Activated CD4-positive, alpha-beta T cell treated with anti-CD3 and anti-CD28 coated beads, Interleukin-2, amount 10 ng/mL, durations not matched to agents 24 days and 14 days (primary cell): ENCODE measurements at regions of chr11 and their contacts with region 1.

Region 1: DNA sequence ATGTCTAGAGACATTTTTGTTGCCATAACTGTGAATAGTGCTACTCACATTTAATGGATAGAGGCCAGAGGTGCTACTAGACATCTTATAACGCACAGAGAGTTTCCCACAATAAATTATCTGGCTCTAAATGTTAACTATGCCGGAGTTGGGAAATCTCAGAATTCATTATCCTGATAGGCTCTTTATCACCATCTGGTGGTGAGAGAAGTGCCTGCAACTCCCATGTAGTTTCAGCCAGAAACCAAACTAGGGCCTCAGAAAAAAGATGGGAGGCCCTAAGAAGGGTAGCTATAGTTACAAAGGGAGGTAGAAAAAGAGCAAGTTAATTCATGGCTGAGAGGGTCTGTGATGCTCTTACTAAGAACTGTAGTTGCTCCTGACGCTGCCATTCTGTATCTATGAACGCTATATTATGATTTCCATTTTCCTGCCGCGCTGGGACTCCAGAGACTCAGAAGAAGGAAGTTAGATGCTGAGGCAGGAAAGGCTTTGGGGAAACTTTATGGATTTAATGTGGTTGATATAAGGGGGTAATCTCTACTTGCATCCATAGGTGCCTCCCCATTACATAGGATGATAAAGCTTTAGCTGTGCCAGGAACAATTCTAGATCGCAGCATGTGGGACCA is 22.9 kb upstream of the MRPL17 start:
- DNase-seq: peak; percentile 82
- H3K4me3 Mint-ChIP-seq: no peak overlapping the region
- H3K27ac Mint-ChIP-seq: no peak overlapping the region
- H3K4me1 Mint-ChIP-seq: peaks cover 4% of the 10 kb centered on the region
- H3K27me3 Mint-ChIP-seq: no peaks in the 10 kb centered on the region

Region 2: GRCh38 chr11:6334806-6335205 is 371.2 kb before region 1 on chr11:
- intact Hi-C with region 1: no loop called
- DNase-seq: no peak
- H3K4me3 Mint-ChIP-seq: no peak overlapping the region
- H3K27ac Mint-ChIP-seq: no peak overlapping the region
- H3K4me1 Mint-ChIP-seq: no peaks in the 10 kb centered on the region
- H3K27me3 Mint-ChIP-seq: peaks cover 22% of the 10 kb centered on the region

Region 3: DNA sequence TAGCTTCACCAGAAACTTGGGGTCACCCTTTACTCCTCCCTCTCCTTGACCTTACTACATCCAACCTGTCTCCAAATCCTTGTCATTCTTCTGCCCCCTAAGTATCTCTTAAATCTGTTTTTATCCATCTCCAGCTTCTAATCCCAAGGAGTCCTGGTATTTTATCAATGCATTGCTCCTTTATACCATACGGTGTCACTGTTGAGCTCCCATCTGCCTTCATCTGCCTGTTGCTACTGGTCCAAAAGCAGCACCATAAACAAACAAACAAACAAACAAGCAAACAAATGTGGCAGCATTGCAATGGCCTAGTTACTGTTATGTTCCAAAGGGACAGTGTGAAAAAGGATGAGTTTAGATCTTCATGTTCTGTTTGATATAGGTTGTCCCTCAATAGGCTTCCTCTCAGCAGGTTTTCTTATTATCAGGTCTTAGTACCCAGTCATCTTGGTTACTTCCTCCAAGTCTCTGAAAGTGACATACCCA is 174.7 kb before region 1 on chr11:
- intact Hi-C with region 1: loop called (anchors 1 kb)
- DNase-seq: peak; percentile 83
- H3K4me3 Mint-ChIP-seq: no peak overlapping the region
- H3K27ac Mint-ChIP-seq: no peak overlapping the region
- H3K4me1 Mint-ChIP-seq: peaks cover 15% of the 10 kb centered on the region
- H3K27me3 Mint-ChIP-seq: no peaks in the 10 kb centered on the region

Region 4: DNA sequence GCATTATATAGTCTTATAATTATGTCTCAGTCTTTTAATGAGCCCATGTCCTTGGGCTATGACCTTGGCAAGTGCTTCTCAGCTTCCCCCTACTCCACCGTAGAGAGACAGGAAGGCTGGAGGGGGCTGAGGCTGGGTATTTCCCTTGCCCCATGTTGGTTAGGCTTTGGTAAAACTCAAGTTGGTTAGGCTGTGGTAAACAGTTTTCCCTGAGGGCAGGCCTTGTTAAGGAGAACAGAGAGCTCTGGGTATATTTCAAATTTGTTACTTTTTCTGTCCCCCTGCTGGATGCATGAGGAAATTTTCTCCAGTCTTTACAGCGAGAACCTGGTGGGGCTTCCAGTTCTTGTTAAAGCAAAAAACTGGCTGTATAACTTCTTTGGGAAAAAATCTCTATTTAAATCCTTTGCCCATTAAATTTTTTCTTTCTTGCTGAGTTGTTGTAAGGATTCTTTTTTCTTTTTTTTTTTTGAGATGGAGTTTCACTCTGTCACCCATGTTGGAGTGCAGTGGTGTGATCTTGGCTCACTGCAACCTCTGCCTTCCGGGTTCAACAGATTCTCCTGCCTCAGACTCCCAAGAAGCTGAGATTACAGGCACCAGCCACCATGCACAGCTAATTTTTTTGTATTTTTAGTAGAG is 38.2 kb before region 1 on chr11:
- intact Hi-C with region 1: no loop called
- DNase-seq: peak; percentile 84
- H3K4me3 Mint-ChIP-seq: no peak overlapping the region
- H3K27ac Mint-ChIP-seq: peak overlapping the region; percentile 29
- H3K4me1 Mint-ChIP-seq: peaks cover 50% of the 10 kb centered on the region
- H3K27me3 Mint-ChIP-seq: peaks cover 4% of the 10 kb centered on the region

Region 5: GRCh38 chr11:6727971-6728760 is 22.1 kb after region 1 on chr11:
- intact Hi-C with region 1: no loop called
- DNase-seq: no peak
- H3K4me3 Mint-ChIP-seq: no peak overlapping the region
- H3K27ac Mint-ChIP-seq: no peak overlapping the region
- H3K4me1 Mint-ChIP-seq: peaks cover 24% of the 10 kb centered on the region
- H3K27me3 Mint-ChIP-seq: no peaks in the 10 kb centered on the region

Region 6: DNA sequence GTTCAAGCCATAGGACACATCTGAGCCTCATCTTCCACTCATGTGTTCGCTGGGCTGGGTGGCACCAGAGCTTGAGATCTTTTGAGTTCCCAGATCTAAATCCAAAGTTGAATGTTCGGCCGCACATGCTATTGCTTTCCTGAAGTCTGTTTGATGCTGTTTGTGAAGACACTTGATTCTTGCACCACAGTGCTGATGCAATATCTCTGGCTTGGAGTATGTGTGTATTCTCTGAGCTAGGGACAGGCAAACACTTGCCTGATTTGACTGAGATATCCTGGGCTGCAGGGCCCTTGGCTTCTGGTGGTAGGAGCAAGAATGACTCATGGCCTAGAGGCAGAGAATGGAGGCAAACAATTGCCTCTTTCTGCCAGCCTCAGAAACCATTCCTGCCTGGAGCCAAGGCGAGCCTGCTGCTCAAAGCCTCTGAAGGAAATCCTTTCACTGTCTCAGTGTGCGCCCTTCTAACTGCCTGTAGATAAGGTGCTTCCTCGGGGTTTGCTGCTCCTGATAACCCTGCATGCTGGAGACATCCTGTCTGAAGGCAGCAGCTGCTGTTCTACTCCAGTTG is 894.3 kb after region 1 on chr11:
- intact Hi-C with region 1: no loop called
- DNase-seq: no peak
- H3K4me3 Mint-ChIP-seq: no peak overlapping the region
- H3K27ac Mint-ChIP-seq: no peak overlapping the region
- H3K4me1 Mint-ChIP-seq: no peaks in the 10 kb centered on the region
- H3K27me3 Mint-ChIP-seq: peaks cover 2% of the 10 kb centered on the region